ENCODE measurements at regions of chr19 and their contacts with region 1.

Region 1: GRCh38 chr19:39524495-39524894 is 8.2 kb downstream of the EID2B start:
- DNase-seq: no peak
- ATAC-seq: peak; percentile 1; the same call in 1 of the 2 replicates
- H3K4me3 ChIP-seq: no peak overlapping the region
- H3K27ac ChIP-seq: no peak overlapping the region
- H3K4me1 ChIP-seq: peaks cover 3% of the 10 kb centered on the region; the same call in 1 of the 2 replicates
- H3K27me3 ChIP-seq: no peaks in the 10 kb centered on the region
- CTCF ChIP-seq: no peak

Region 2: GRCh38 chr19:39509233-39509632 is 15.3 kb before region 1 on chr19:
- CTCF ChIA-PET with region 1: interaction called, 14 read pairs
- POLR2A ChIA-PET with region 1: interaction called, 16 read pairs
- in situ Hi-C with region 1: no loop called
- intact Hi-C with region 1: no loop called
- DNase-seq: no peak
- ATAC-seq: no peak
- H3K4me3 ChIP-seq: no peak overlapping the region
- H3K27ac ChIP-seq: no peak overlapping the region
- H3K4me1 ChIP-seq: peaks cover 16% of the 10 kb centered on the region
- H3K27me3 ChIP-seq: peaks cover 4% of the 10 kb centered on the region
- CTCF ChIP-seq: no peak

Region 3: GRCh38 chr19:39679056-39679790 is 154.7 kb after region 1 on chr19:
- CTCF ChIA-PET with region 1: interaction called, 10 read pairs
- POLR2A ChIA-PET with region 1: no interaction called
- in situ Hi-C with region 1: no loop called
- intact Hi-C with region 1: no loop called
- DNase-seq: no peak
- ATAC-seq: peak; percentile 6
- H3K4me3 ChIP-seq: no peak overlapping the region
- H3K27ac ChIP-seq: no peak overlapping the region
- H3K4me1 ChIP-seq: peaks cover 11% of the 10 kb centered on the region
- H3K27me3 ChIP-seq: peaks cover 54% of the 10 kb centered on the region
- CTCF ChIP-seq: no peak

Measured in Panc1 (cell line).